ENCODE measurements at regions of chr12 and their contacts with region 1.

Region 1: DNA sequence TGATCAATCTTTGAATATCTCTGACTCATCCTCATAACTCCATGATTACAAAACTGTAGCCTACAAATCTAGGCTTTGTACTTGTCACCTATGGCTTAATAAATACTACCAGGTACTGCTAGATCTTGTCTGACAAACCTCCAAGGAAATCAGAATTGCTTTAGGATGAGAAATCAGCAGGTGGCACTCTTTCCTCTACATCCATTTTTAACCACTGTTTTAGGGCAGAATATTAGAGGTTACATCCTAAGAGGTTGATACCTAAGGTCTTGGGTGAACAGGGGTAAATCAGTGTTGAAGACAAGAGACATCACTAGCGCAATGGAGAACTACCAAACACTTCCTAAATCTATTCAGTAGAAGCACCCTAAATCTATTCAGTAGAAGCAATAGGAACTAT is 63.1 kb upstream of the SOX5 start:
- DNase-seq: peak; percentile 28
- ATAC-seq: peak; percentile 37; the same call in 2 of the 3 replicates
- H3K4me3 ChIP-seq: no peak overlapping the region
- H3K27ac ChIP-seq: no peak overlapping the region
- H3K4me1 ChIP-seq: peaks cover 35% of the 10 kb centered on the region
- H3K27me3 ChIP-seq: no peaks in the 10 kb centered on the region
- CTCF ChIP-seq: peak; percentile 64
- EP300 ChIP-seq: no peak
- POLR2A ChIP-seq: no peak
- RAD21 ChIP-seq: no peak

Region 2: DNA sequence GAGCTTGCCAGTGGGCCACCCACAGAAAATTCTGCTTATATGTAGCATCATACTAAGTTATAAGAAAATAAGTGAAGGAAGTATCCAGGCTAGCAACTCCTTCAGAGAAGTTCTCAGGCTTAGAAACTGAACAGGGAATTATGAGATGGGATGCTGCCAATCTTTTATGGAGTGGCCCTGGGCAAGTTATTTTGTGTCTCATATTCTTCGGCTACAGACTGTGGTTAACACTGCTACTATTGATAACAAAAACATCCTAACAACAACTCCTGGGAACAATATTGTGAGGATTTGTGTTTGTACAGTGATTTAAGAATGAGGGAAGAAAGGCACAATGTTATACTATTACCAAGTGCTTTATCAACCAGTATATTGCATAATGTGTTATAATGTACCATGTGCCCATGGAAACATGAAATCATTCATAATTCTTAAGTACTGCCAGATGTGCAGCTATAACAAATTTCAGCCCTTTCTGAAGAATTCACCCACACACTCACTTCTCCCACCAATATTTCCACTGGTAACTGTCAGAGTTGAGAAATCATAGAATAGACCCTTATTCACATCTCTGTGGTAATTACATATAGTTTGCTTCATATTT is 50.2 kb after region 1 on chr12:
- CTCF ChIA-PET with region 1: no interaction called
- POLR2A ChIA-PET with region 1: no interaction called
- in situ Hi-C with region 1: no loop called
- intact Hi-C with region 1: no loop called
- DNase-seq: no peak
- ATAC-seq: no peak
- H3K4me3 ChIP-seq: no peak overlapping the region
- H3K27ac ChIP-seq: no peak overlapping the region
- H3K4me1 ChIP-seq: peaks cover 11% of the 10 kb centered on the region; the same call in 1 of the 2 replicates
- H3K27me3 ChIP-seq: no peaks in the 10 kb centered on the region
- CTCF ChIP-seq: no peak
- EP300 ChIP-seq: no peak
- POLR2A ChIP-seq: no peak
- RAD21 ChIP-seq: no peak

Region 3: GRCh38 chr12:24270965-24271364 is 258.4 kb after region 1 on chr12:
- CTCF ChIA-PET with region 1: no interaction called
- POLR2A ChIA-PET with region 1: no interaction called
- in situ Hi-C with region 1: no loop called
- intact Hi-C with region 1: loop called (anchors 1 kb)
- DNase-seq: no peak
- ATAC-seq: no peak
- H3K4me3 ChIP-seq: no peak overlapping the region
- H3K27ac ChIP-seq: no peak overlapping the region
- H3K4me1 ChIP-seq: peaks cover 8% of the 10 kb centered on the region
- H3K27me3 ChIP-seq: no peaks in the 10 kb centered on the region
- CTCF ChIP-seq: no peak
- EP300 ChIP-seq: no peak
- POLR2A ChIP-seq: no peak
- RAD21 ChIP-seq: no peak

Region 4: DNA sequence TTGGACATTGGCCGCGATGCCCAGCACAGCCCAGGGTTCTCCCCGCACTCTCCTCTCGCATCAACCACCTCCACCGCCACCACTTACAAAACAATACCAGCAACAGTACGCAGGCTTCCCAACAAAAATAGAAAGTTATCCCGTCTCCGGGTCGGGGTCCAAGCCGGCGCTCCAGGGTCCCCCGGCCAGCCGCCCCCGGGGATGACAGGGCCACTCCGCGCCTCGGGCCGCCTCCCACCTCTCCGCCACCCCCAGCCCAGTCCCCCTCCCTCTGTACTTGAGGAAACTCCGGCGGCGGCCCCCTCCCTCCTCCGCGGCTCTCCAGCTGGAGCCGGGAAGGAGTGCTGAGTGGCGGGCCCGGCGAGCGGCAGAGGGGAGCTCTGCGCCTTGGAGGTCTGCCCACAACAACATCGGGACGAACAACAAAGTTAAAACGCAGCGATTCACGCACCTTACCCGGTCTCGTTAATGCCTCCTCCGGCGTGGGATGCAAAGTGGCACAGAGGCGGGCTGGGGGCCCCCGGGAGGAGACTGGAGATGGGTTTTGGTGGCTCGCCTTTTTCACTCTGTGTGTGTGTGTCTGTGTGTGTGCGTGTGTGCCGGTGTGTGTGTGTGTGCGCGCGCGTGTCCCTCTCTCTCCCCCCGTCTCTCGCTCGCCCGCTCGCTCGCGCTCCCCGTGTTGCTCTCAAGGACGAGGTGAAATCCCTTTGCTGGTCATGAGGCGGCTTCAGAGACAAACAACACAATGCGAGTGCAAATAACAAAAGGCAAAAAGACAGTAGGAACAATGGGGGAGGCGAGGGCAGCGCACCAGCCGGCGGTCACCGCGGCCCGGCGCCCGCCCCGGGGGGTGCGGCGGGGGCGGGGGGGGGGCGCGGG is 549.6 kb after region 1 on chr12:
- CTCF ChIA-PET with region 1: no interaction called
- POLR2A ChIA-PET with region 1: no interaction called
- in situ Hi-C with region 1: loop called (anchors 25 kb)
- intact Hi-C with region 1: no loop called
- DNase-seq: no peak
- ATAC-seq: peak; percentile 65
- H3K4me3 ChIP-seq: peak overlapping the region; percentile 46 to 70 (median 67)
- H3K27ac ChIP-seq: no peak overlapping the region
- H3K4me1 ChIP-seq: peaks cover 23% of the 10 kb centered on the region
- H3K27me3 ChIP-seq: peaks cover 2 to 44% of the 10 kb centered on the region in 2 experiments
- CTCF ChIP-seq: no peak
- EP300 ChIP-seq: no peak
- POLR2A ChIP-seq: no peak
- RAD21 ChIP-seq: no peak

Measured in HepG2 (cell line).